ENCODE measurements at regions of chr5 and their contacts with region 1.

Region 1: DNA sequence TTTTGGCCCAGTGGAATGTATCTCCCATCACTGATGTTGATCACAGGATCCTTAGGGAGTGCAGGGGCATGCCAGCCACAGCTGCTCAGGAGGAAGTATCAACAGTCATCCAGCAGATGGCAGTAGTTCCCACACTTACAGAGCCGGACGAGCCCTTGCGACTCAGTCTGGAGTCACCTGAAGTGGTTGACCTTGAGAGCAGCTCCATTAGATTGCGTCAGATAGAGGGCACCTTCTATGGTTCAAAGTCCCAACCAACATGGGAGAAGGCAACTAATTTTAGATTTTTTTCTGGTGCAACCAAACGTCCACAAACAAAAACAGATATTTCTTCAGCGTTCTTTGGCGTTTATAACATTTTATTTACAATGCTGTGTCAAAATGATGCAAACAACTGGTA is 124.5 kb downstream of the EGFLAM start:
- DNase-seq: peak; percentile 76
- H3K4me3 Mint-ChIP-seq: no peak overlapping the region
- H3K27ac Mint-ChIP-seq: no peak overlapping the region
- H3K4me1 Mint-ChIP-seq: peaks cover 22% of the 10 kb centered on the region
- H3K27me3 Mint-ChIP-seq: no peaks in the 10 kb centered on the region

Region 2: DNA sequence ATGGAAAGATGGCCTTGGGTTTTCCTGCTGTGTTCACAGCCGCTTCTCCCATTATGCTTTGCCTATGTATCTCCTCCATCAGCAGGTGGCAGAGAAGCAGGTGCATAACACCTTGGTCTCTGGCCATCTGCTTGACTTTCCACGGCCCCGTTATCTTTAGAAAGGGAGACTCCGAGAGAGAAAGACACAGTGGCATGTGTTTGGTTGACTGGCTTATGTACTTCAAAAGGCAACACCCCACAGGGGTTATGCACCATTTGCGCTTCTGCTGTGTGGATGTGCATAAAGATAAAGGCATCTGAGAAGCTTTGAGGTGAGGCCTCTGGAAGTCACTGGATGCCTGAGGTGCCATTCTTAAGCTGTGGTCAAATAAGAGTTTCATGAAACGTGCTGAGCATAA is 13.9 kb after region 1 on chr5:
- CTCF ChIA-PET with region 1: interaction called, 11 read pairs
- intact Hi-C with region 1: no loop called
- DNase-seq: no peak
- H3K4me3 Mint-ChIP-seq: no peak overlapping the region
- H3K27ac Mint-ChIP-seq: no peak overlapping the region
- H3K4me1 Mint-ChIP-seq: no peaks in the 10 kb centered on the region
- H3K27me3 Mint-ChIP-seq: peaks cover 13% of the 10 kb centered on the region

Region 3: GRCh38 chr5:38404667-38405276 is 21.9 kb after region 1 on chr5:
- CTCF ChIA-PET with region 1: interaction called, 12 read pairs
- intact Hi-C with region 1: loop called (anchors 1 kb)
- DNase-seq: peak; percentile 44
- H3K4me3 Mint-ChIP-seq: no peak overlapping the region
- H3K27ac Mint-ChIP-seq: no peak overlapping the region
- H3K4me1 Mint-ChIP-seq: peaks cover 2% of the 10 kb centered on the region
- H3K27me3 Mint-ChIP-seq: peaks cover 23% of the 10 kb centered on the region

Region 4: DNA sequence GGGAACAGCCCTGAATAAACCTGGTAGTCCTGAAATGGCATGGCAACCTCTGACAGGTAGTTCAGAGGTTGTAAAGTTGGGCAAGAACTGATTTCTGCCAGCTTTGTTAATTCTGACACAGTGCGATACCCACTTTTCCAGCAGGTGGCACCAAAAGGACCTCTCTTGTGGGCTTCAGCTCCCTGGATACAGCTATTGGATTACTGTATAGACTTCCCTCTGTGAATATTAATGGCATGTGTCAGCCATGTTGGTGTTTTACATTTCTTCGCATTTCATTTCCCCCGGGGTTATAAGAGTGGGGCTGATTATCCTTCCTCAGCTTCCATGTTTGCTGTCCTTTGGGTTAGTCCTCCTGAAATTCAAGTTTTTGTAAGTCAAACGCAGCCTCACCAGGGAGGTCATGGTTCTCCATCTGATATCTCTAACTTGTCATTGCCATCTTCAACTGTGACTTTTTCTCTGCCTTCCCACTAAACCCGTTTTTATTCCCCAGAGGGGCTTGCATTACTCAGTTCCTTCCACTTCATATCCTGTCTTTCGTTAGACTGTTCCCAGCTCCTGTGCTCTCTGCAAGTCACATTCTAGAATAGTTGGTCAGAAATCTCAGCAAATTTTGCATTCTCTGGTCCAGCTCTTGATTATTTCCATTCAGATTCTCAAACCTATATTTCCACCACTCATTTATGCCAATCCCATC is 37.9 kb after region 1 on chr5:
- CTCF ChIA-PET with region 1: interaction called, 5 read pairs
- intact Hi-C with region 1: loop called (anchors 1 kb)
- DNase-seq: peak; percentile 65
- H3K4me3 Mint-ChIP-seq: no peak overlapping the region
- H3K27ac Mint-ChIP-seq: no peak overlapping the region
- H3K4me1 Mint-ChIP-seq: no peaks in the 10 kb centered on the region
- H3K27me3 Mint-ChIP-seq: peaks cover 16% of the 10 kb centered on the region

Region 5: GRCh38 chr5:38551030-38552017 is 168.4 kb after region 1 on chr5:
- CTCF ChIA-PET with region 1: no interaction called
- intact Hi-C with region 1: loop called (anchors 5 kb)
- DNase-seq: peak; percentile 12
- H3K4me3 Mint-ChIP-seq: no peak overlapping the region
- H3K27ac Mint-ChIP-seq: no peak overlapping the region
- H3K4me1 Mint-ChIP-seq: peaks cover 4% of the 10 kb centered on the region
- H3K27me3 Mint-ChIP-seq: peaks cover 33% of the 10 kb centered on the region

Region 6: DNA sequence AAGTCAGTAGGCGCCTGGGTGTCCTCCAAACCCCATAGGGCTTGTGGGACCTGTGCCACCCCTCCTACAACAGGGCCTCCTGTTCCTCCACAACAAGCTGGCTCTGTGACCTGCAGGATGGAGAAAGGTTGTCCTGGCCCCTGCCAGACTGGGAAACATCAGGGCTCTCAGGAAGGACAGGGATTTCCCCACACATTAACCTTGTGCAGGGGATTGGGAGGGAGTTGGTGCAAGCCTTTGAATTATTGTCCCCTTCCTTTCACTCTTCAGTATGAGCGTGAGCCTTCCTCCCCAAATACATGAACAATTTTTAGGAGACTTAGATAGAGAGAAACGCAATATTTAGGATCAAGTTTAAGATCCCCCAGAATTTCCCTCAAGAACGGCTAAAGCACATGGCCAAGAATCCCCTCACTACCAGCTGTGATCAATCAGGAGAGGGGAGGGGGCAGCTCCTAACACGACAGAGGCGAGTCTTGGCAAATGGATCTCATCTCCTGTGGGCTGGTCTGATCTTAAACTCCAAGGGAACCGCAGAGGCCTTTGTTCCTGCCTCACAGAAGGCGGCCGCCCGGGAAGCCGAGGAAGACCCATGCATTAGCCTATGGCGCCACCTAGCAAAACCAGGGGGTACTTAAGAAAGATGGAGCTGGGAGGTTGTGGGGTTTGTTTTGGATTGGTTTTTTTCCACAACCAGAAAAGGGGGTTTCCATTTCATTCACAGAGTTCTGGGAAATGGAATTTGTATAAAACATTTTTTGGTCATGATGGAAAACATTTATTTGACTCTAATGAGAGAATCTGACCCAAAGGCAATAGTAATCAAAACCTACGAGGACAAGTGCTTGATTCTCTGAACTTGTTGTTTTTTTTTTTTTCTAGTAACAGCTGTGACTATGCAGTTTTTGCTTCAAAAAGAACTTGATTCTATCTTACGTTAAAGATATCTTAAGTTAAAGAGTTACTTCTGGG is 426.8 kb after region 1 on chr5:
- CTCF ChIA-PET with region 1: interaction called, 16 read pairs
- intact Hi-C with region 1: loop called (anchors 1 kb)
- DNase-seq: peak; percentile 78
- H3K4me3 Mint-ChIP-seq: no peak overlapping the region
- H3K27ac Mint-ChIP-seq: no peak overlapping the region
- H3K4me1 Mint-ChIP-seq: peaks cover 12% of the 10 kb centered on the region
- H3K27me3 Mint-ChIP-seq: peaks cover 30% of the 10 kb centered on the region

Region 7: DNA sequence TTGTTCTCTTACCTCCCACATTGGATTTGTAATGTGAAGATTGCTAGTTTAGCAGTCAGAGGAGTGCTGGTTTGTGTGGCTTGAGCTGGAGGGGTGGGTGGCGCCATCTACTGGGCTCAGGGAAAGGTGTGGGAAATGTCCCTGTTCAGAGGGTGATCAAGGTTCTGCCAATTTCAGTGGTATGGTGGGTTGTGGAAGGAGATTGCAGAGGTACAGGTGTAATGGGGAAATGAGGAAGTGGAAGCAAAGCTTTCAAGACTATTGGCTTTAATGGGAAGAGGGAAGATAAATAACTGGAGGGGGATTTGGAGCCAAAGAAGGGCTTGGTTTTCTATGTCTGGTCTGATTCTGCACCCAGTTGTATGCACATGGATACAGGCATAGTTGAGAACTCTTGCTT is 539.3 kb after region 1 on chr5:
- CTCF ChIA-PET with region 1: no interaction called
- intact Hi-C with region 1: loop called (anchors 2 kb)
- DNase-seq: peak; percentile 68
- H3K4me3 Mint-ChIP-seq: no peak overlapping the region
- H3K27ac Mint-ChIP-seq: no peak overlapping the region
- H3K4me1 Mint-ChIP-seq: no peaks in the 10 kb centered on the region
- H3K27me3 Mint-ChIP-seq: peaks cover 16% of the 10 kb centered on the region